ENCODE measurements at regions of chr7 and their contacts with region 1.

Region 1: DNA sequence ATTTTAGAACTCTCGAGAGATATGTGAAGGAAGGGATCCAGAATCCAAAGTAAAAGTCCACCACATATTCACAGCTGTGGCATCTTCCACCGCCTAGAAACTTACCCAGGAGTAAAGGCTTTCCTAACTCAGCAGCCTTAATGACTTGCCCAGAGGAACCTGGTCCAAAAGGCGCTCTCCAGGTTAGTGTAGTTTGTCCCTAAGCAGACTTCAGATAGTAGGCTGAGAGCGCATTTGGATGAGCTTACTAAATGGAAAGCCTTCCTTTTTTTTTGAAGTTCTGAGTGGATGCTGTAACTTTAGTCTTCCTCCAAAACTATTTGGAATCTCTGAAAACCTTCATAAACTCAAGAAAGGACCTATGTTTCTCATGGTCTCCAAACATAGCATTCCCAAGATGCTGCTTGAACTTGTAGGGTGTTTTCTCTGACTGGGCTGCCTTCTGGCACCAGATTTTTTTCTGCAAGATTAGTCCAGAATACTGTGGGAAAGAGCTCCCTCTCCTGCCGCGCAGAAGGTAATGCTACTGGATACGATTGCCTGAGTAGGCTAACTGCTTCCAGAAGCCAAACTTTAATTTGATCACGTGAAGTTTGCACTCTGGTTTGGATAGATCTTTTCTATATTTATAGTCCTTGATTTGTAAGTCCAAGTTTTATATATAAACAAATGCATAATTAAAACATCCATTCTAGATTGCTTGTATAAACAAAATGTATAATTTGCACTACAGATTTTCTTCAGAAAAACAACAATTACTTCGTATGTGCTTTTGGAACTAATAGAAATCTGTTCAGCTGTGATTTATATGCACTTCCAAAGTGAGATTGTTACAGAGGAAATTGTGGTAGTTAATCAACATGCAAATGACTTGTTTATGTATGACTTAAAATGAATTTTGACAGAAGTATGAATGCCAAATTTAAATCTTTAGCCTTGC is 19.6 kb upstream of the GPR37 start:
- DNase-seq: peak; percentile 73
- ATAC-seq: peak; percentile 85
- H3K4me3 ChIP-seq: no peak overlapping the region
- H3K27ac ChIP-seq: no peak overlapping the region
- H3K4me1 ChIP-seq: peaks cover 2% of the 10 kb centered on the region; the same call in 1 of the 2 replicates
- H3K27me3 ChIP-seq: no peaks in the 10 kb centered on the region
- CTCF ChIP-seq: peak; percentile 95
- POLR2A ChIP-seq: 0 out of 2 replicates have a peak, but pooled peaks have one; percentile 43
- RAD21 ChIP-seq: peak; percentile 97

Region 2: GRCh38 chr7:124101173-124101768 is 683.9 kb before region 1 on chr7:
- CTCF ChIA-PET with region 1: no interaction called
- POLR2A ChIA-PET with region 1: no interaction called
- dilution Hi-C with region 1: no loop called
- in situ Hi-C with region 1: no loop called
- intact Hi-C with region 1: loop called (anchors 1 kb)
- DNase-seq: peak; percentile 10
- ATAC-seq: no peak
- H3K4me3 ChIP-seq: no peak overlapping the region
- H3K27ac ChIP-seq: no peak overlapping the region
- H3K4me1 ChIP-seq: no peaks in the 10 kb centered on the region
- H3K27me3 ChIP-seq: no peaks in the 10 kb centered on the region
- CTCF ChIP-seq: peak; percentile 47
- POLR2A ChIP-seq: no peak
- RAD21 ChIP-seq: peak; percentile 56